ENCODE measurements at regions of chr7 and their contacts with region 1.

Region 1: GRCh38 chr7:90155206-90155605 is 937 bp downstream of the STEAP1 start:
- DNase-seq: peak; percentile 50
- H3K4me3 Mint-ChIP-seq: peak overlapping the region; percentile 75
- H3K27ac Mint-ChIP-seq: no peak overlapping the region
- H3K4me1 Mint-ChIP-seq: peaks cover 7% of the 10 kb centered on the region
- H3K27me3 Mint-ChIP-seq: peaks cover 11% of the 10 kb centered on the region
- CTCF ChIP-seq: no peak

Region 2: GRCh38 chr7:90033850-90034249 is 121.4 kb before region 1 on chr7:
- CTCF ChIA-PET with region 1: no interaction called
- POLR2A ChIA-PET with region 1: no interaction called
- intact Hi-C with region 1: no loop called
- DNase-seq: no peak
- H3K4me3 Mint-ChIP-seq: no peak overlapping the region
- H3K27ac Mint-ChIP-seq: no peak overlapping the region
- H3K4me1 Mint-ChIP-seq: no peaks in the 10 kb centered on the region
- H3K27me3 Mint-ChIP-seq: peaks cover 45% of the 10 kb centered on the region
- CTCF ChIP-seq: no peak

Region 3: DNA sequence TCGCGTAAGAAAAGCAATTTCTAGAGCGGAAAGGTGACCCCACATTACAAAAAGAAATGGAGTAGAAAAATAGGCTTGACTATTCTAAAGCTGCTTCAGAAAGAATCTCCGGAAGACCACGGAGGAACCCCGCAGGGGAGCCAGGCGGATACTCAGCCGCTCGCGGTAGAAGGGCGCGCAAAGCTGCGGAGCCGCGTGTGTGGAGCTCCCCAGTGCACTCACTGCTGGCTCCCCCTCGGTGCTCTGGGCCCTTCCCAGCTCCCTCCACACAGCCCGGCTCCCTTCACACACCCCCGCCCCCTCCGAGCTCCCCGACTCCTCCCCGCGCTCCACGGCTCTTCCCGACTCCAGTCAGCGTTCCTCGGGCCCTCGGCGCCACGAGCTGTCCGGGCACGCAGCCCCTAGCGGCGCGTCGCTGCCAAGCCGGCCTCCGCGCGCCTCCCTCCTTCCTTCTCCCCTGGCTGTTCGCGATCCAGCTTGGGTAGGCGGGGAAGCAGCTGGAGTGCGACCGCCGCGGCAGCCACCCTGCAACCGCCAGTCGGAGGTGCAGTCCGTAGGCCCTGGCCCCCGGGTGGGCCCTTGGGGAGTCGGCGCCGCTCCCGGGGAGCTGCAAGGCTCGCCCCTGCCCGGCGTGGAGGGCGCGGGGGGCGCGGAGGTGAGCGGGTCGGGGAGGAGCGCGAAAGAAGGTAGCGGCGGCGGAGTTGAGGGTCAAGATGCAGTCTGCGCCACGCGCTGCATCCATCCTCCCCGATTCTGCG is 56.4 kb after region 1 on chr7 and contains the start of gene STEAP2:
- CTCF ChIA-PET with region 1: interaction called, 24 read pairs
- POLR2A ChIA-PET with region 1: interaction called, 3 read pairs
- intact Hi-C with region 1: loop called (anchors 1 kb)
- DNase-seq: peak; percentile 88
- H3K4me3 Mint-ChIP-seq: no peak within 1 kb of the TSS
- H3K27ac Mint-ChIP-seq: peak within 1 kb of the TSS; percentile 49
- H3K4me1 Mint-ChIP-seq: peaks cover 4% of the 10 kb centered on the region
- H3K27me3 Mint-ChIP-seq: no peaks in the 10 kb centered on the region
- CTCF ChIP-seq: peak; percentile 45
- total RNA-seq, gene STEAP2: 0.68 and 1.3 TPM in 2 replicates

Region 4: GRCh38 chr7:90262438-90262837 is 107.2 kb after region 1 on chr7:
- CTCF ChIA-PET with region 1: interaction called, 43 read pairs
- POLR2A ChIA-PET with region 1: no interaction called
- intact Hi-C with region 1: loop called (anchors 1 kb)
- DNase-seq: peak; percentile 44
- H3K4me3 Mint-ChIP-seq: no peak overlapping the region
- H3K27ac Mint-ChIP-seq: no peak overlapping the region
- H3K4me1 Mint-ChIP-seq: no peaks in the 10 kb centered on the region
- H3K27me3 Mint-ChIP-seq: no peaks in the 10 kb centered on the region
- CTCF ChIP-seq: peak; percentile 33

Region 5: GRCh38 chr7:90424720-90425119 is 269.5 kb after region 1 on chr7:
- CTCF ChIA-PET with region 1: interaction called, 58 read pairs
- POLR2A ChIA-PET with region 1: no interaction called
- intact Hi-C with region 1: no loop called
- DNase-seq: no peak
- H3K4me3 Mint-ChIP-seq: no peak overlapping the region
- H3K27ac Mint-ChIP-seq: no peak overlapping the region
- H3K4me1 Mint-ChIP-seq: peaks cover 7% of the 10 kb centered on the region
- H3K27me3 Mint-ChIP-seq: no peaks in the 10 kb centered on the region
- CTCF ChIP-seq: no peak

Region 6: DNA sequence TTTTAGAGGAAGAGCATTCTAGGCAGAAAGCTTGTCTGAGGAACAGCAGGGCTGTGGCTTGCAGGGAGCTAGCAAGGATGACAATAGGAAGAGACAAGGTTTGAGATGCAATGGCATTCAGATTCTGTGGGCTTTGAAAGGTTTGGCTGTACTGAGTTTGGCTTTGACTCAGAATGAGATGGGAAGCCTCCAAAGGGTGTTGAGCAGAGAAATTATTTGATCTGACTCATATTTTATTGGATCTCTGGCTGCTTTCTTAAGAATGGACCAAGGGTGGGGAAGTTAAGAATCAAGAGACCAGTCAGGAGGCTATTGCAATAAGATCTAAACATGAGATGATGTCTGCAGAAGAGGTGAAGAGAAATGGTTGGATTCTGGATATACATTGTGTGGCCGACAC is 714.1 kb after region 1 on chr7:
- CTCF ChIA-PET with region 1: no interaction called
- POLR2A ChIA-PET with region 1: no interaction called
- intact Hi-C with region 1: no loop called
- DNase-seq: no peak
- H3K4me3 Mint-ChIP-seq: no peak overlapping the region
- H3K27ac Mint-ChIP-seq: no peak overlapping the region
- H3K4me1 Mint-ChIP-seq: peaks cover 6% of the 10 kb centered on the region
- H3K27me3 Mint-ChIP-seq: no peaks in the 10 kb centered on the region
- CTCF ChIP-seq: no peak